ENCODE measurements at regions of chr19 and their contacts with region 1.

Region 1: GRCh38 chr19:2014731-2015607 is 545 bp downstream of the BTBD2 start:
- DNase-seq: no peak
- ATAC-seq: peak; percentile 15 to 19
- H3K4me3 ChIP-seq: peak overlapping the region; percentile 48 to 67 (median 62)
- H3K27ac ChIP-seq: peak overlapping the region; percentile 56 to 81 (median 69)
- H3K4me1 ChIP-seq: peaks cover 12 to 31% of the 10 kb centered on the region in 2 donors
- H3K27me3 ChIP-seq: no peaks in the 10 kb centered on the region
- CTCF ChIP-seq: no peak
- POLR2A ChIP-seq: no peak

Region 2: DNA sequence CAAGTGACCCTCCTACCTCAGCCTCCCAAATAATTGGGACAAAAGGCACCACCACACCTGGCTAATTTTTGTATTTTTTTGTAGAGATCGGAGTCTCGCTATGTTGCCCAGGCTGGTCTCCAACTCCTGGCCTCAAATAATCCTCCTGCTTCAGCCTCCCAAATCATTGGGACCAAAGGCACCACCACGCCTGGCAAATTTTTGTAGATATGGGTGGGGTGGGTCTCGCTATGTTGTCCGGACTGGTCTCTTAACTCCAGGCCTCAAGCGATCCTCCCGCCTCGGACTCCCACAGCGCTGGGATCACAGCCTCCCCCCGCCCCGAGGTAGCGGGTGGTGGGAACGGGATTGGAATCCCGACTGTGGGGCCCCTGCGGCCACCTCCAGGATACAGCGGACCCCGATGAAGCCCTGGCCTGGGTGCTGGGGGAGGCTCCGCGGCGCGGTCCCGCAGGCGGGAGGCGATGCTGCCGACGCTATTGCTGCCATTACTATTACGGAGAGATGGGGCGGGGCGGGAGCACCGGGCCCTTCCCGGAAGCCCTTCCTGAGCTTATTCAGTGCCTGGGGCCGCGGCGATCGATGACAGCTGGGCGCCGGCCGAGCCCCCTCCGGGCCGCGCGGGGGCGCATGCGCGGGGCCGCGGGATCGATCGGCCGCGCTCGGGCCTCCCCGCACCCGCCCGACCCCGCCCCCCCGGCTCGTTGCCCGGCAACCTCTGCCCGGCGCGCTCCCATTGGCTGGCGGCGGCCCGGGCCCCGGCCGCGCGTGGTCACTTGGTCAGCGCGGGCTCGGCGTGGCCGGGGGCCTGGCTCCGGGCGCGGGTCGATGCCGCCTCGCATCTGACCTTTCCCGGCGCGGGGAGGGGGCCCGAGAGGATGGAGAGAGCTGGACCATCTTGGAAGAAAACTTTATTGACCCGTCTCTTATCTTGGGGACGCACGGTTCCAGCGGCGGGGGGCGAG is 289.6 kb before region 1 on chr19:
- in situ Hi-C with region 1: no loop called
- intact Hi-C with region 1: no loop called
- DNase-seq: no peak
- ATAC-seq: no peak
- H3K4me3 ChIP-seq: peak overlapping the region in 3 of 4 donors; percentile 31 to 39 (median 35)
- H3K27ac ChIP-seq: no peak overlapping the region
- H3K4me1 ChIP-seq: no peaks in the 10 kb centered on the region
- H3K27me3 ChIP-seq: peaks cover 69 to 78% (median 74%) of the 10 kb centered on the region in 3 donors
- CTCF ChIP-seq: no peak
- POLR2A ChIP-seq: no peak

Region 3: DNA sequence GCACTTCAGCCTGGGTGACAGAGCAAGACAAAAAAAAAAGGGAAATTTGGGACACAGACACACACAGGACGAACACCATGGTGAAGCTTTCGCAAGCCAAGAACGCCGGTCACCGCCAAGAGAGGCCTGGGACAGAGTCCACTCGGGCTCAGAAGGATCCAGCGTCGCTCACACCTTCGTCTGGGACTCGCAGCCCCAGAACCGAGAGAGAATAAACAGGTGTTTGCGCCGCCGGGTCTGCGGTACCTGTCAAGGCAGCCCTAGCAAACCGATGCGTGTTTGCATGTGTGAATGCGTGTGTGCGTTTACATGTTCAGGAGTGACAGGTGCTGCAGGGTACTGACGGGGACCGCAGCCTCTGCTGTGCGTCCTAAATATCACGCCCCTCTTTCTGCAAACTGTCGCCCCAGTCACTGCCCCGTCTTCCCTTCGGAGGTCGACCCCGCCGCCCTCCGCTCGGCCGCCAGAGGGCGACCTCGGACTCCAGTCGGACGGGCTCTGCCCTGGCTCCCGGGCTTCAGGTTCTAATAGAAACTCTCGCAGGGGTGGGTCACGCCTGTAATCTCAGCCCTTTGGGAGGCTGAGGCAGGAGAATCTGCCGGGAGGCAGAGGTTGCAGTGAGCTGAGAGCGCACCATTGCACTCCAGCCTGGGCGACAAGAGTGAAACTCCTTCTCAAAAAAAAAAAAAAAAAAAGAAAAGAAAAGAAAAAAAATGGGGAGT is 85.8 kb before region 1 on chr19:
- in situ Hi-C with region 1: no loop called
- intact Hi-C with region 1: loop called (anchors 5 kb)
- DNase-seq: peak; percentile 52 to 67
- ATAC-seq: peak; percentile 93 to 95
- H3K4me3 ChIP-seq: peak overlapping the region; percentile 26 to 45 (median 42)
- H3K27ac ChIP-seq: no peak overlapping the region
- H3K4me1 ChIP-seq: peaks cover 12 to 15% of the 10 kb centered on the region in 2 donors
- H3K27me3 ChIP-seq: no peaks in the 10 kb centered on the region
- CTCF ChIP-seq: peak; percentile 66 to 95 (median 91)
- POLR2A ChIP-seq: no peak

Region 4: GRCh38 chr19:2113439-2114211 is 98.7 kb after region 1 on chr19:
- in situ Hi-C with region 1: no loop called
- intact Hi-C with region 1: no loop called
- DNase-seq: no peak
- ATAC-seq: peak in 1 of 2 donors; percentile 18
- H3K4me3 ChIP-seq: no peak overlapping the region
- H3K27ac ChIP-seq: no peak overlapping the region
- H3K4me1 ChIP-seq: no peaks in the 10 kb centered on the region
- H3K27me3 ChIP-seq: no peaks in the 10 kb centered on the region
- CTCF ChIP-seq: no peak
- POLR2A ChIP-seq: no peak